Activated naive CD4-positive, alpha-beta T cell treated with anti-CD3 and anti-CD28 coated beads, Interleukin-2, amount 10 ng/mL, durations not matched to agents 7 days and 5 days (primary cell): ENCODE measurements at regions of chr7 and their contacts with region 1.

Region 1: GRCh38 chr7:130896898-130897514 is 163.0 kb upstream of the KLF14 start:
- DNase-seq: peak; percentile 82
- H3K4me3 Mint-ChIP-seq: no peak overlapping the region
- H3K27ac Mint-ChIP-seq: peak overlapping the region; percentile 83
- H3K4me1 Mint-ChIP-seq: peaks cover 83% of the 10 kb centered on the region
- H3K27me3 Mint-ChIP-seq: no peaks in the 10 kb centered on the region

Region 2: GRCh38 chr7:130882396-130882795 is 14.6 kb before region 1 on chr7:
- CTCF ChIA-PET with region 1: interaction called, 19 read pairs
- DNase-seq: no peak
- H3K4me3 Mint-ChIP-seq: no peak overlapping the region
- H3K27ac Mint-ChIP-seq: no peak overlapping the region
- H3K4me1 Mint-ChIP-seq: peaks cover 27% of the 10 kb centered on the region
- H3K27me3 Mint-ChIP-seq: no peaks in the 10 kb centered on the region

Region 3: GRCh38 chr7:130921391-130922180 is 24.6 kb after region 1 on chr7:
- CTCF ChIA-PET with region 1: interaction called, 10 read pairs
- DNase-seq: no peak
- H3K4me3 Mint-ChIP-seq: no peak overlapping the region
- H3K27ac Mint-ChIP-seq: peak overlapping the region; percentile 70
- H3K4me1 Mint-ChIP-seq: peaks cover 88% of the 10 kb centered on the region
- H3K27me3 Mint-ChIP-seq: no peaks in the 10 kb centered on the region

Region 4: GRCh38 chr7:130941322-130942210 is 44.6 kb after region 1 on chr7:
- CTCF ChIA-PET with region 1: interaction called, 19 read pairs
- DNase-seq: no peak
- H3K4me3 Mint-ChIP-seq: peak overlapping the region; percentile 73
- H3K27ac Mint-ChIP-seq: peak overlapping the region; percentile 89
- H3K4me1 Mint-ChIP-seq: peaks cover 91% of the 10 kb centered on the region
- H3K27me3 Mint-ChIP-seq: no peaks in the 10 kb centered on the region

Region 5: GRCh38 chr7:130961128-130961601 is 64.2 kb after region 1 on chr7:
- CTCF ChIA-PET with region 1: interaction called, 54 read pairs
- DNase-seq: peak; percentile 87
- H3K4me3 Mint-ChIP-seq: peak overlapping the region; percentile 90
- H3K27ac Mint-ChIP-seq: peak overlapping the region; percentile 99
- H3K4me1 Mint-ChIP-seq: peaks cover 49% of the 10 kb centered on the region
- H3K27me3 Mint-ChIP-seq: no peaks in the 10 kb centered on the region

Region 6: DNA sequence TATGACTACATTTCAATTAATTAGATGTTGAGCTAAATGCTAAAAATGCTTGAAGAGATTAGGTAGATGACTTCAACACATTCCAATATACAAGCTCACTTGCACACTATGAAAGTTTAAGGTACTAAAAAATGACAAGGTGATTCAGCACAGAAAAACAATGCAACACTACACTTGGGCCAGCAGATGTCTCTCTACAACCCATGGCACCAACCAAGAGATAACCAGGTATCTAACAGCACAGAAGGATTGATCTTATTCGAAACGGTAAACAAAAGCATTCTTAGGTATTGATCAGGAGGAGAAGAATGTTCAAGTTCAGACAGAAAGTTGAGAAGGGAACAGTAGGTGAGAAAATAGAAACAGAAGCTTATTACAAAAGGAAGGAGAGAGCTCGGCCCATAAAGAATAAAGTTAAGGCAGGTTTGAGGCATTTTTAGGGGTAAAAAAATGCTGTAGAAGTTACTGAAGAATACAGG is 85.2 kb after region 1 on chr7:
- CTCF ChIA-PET with region 1: interaction called, 39 read pairs
- DNase-seq: peak; percentile 41
- H3K4me3 Mint-ChIP-seq: no peak overlapping the region
- H3K27ac Mint-ChIP-seq: no peak overlapping the region
- H3K4me1 Mint-ChIP-seq: peaks cover 36% of the 10 kb centered on the region
- H3K27me3 Mint-ChIP-seq: no peaks in the 10 kb centered on the region

Region 7: GRCh38 chr7:131027287-131027773 is 130.3 kb after region 1 on chr7:
- CTCF ChIA-PET with region 1: interaction called, 10 read pairs
- DNase-seq: no peak
- H3K4me3 Mint-ChIP-seq: no peak overlapping the region
- H3K27ac Mint-ChIP-seq: peak overlapping the region; percentile 53
- H3K4me1 Mint-ChIP-seq: peaks cover 76% of the 10 kb centered on the region
- H3K27me3 Mint-ChIP-seq: no peaks in the 10 kb centered on the region

Region 8: GRCh38 chr7:131164025-131164899 is 267.3 kb after region 1 on chr7:
- CTCF ChIA-PET with region 1: no interaction called
- DNase-seq: no peak
- H3K4me3 Mint-ChIP-seq: no peak overlapping the region
- H3K27ac Mint-ChIP-seq: no peak overlapping the region
- H3K4me1 Mint-ChIP-seq: no peaks in the 10 kb centered on the region
- H3K27me3 Mint-ChIP-seq: peaks cover 4% of the 10 kb centered on the region